Cardiac septum (tissue), 1 donor: ENCODE measurements at regions of chr7 and their contacts with region 1.

Region 1: GRCh38 chr7:39510864-39511354 is 55.3 kb upstream of the YAE1 start:
- DNase-seq: no peak

Region 2: DNA sequence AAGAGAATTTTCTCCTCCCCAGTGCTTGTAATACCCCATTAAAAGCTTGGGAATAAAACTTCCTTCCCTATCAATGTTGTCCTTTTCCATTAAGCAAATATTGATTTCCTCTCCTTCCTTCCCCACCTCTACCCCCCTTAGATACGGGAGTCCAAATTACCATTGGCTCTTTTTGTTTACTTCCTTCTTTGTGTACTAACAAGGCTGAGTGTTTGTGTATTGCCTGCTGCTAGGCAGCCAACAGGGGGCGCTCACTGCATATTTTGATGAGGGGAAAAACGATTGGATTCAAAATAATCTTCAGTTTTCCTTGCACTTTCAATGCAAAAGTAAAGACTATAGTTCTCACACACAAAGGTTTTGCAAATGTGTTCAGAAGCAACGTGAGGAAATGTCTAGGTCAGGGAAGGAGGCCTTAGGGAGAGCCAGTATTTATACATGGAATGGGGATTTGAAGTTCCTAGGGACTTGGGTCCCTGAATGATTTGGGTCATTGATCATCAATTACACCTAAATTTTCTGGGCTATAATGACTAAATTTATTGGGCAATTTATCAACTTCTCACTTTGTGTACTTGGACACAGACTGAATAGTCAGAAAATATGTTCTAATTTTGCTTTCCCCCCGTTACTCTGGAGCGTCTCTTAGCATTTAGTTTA is 578.3 kb before region 1 on chr7:
- intact Hi-C with region 1: loop called (anchors 10 kb)
- DNase-seq: no peak

Region 3: GRCh38 chr7:39580149-39580874 is 69.4 kb after region 1 on chr7:
- intact Hi-C with region 1: no loop called
- DNase-seq: peak; percentile 79

Region 4: DNA sequence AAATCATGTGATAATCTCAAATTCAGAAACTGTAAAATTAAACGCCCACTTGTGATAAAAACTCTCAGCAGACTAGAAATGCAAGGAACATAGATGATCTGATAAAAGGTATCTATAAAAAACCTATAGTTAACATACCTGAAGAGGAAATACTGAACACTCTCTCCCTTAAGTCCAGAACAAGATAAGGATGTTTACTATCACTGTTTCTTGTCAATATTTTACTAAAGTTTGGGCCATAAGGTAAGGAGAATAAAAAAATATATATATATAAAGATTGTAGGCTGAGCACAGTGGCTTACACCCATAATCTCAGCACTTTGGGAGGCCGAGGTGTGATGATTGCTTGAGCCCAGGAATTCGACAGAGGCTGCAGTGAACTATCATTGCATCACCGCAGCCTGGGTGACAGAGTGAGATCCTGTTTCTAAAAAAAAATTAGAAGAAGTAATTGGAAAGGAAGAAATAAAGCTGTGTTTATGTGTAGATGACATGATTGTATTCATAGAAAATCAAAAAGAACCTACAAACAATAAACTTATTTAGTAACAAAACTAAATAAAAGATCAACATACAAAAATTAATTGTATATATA is 595.1 kb after region 1 on chr7:
- intact Hi-C with region 1: no loop called
- DNase-seq: no peak